PC-9 (cell line): ENCODE measurements at regions of chr22 and their contacts with region 1.

Region 1: DNA sequence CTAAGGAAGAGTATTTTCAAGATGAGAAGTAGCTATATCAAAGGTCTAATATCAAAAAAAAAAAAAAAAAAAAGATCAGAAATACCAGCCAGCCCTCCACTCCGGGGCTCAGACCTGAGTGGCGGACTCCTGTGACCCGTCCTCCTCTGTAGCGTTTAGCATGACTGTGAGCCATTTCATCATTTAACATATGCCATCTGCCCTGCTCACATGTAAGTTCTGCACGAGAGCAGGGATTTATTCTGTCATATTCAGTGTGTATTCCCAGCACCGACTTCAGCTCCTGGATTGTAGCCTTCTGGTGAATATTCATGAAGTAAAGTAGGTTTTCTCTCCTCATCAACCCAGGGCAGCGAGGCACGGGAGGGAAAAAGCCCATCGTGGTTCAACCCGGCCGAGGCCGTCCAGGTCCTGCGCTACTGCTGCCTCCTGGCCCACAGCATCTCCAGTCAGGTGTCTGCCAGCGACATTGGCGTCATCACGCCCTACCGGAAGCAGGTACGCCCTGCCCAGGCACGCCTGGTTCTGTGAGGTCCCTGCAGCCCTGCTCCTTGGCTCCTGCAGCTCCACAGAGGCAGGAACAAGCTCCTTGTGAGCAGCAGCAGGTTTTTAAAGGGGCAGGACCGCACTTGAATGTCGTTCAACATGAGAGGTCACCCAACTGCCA is 12.7 kb upstream of the PANX2 start:
- DNase-seq: peak in 1 of 2 experiments; percentile 74
- H3K4me3 ChIP-seq: no peak overlapping the region
- H3K27ac ChIP-seq: no peak overlapping the region
- H3K4me1 ChIP-seq: no peaks in the 10 kb centered on the region
- H3K27me3 ChIP-seq: peaks cover 21% of the 10 kb centered on the region; the same call in 1 of the 2 replicates
- CTCF ChIP-seq: no peak

Region 2: GRCh38 chr22:49970528-49971231 is 187.2 kb before region 1 on chr22:
- CTCF ChIA-PET with region 1: no interaction called
- POLR2A ChIA-PET with region 1: no interaction called
- intact Hi-C with region 1: no loop called
- DNase-seq: peak; percentile 97 to 99
- H3K4me3 ChIP-seq: peak overlapping the region; percentile 56
- H3K27ac ChIP-seq: peak overlapping the region; percentile 67
- H3K4me1 ChIP-seq: peaks cover 13% of the 10 kb centered on the region
- H3K27me3 ChIP-seq: no peaks in the 10 kb centered on the region
- CTCF ChIP-seq: no peak

Region 3: DNA sequence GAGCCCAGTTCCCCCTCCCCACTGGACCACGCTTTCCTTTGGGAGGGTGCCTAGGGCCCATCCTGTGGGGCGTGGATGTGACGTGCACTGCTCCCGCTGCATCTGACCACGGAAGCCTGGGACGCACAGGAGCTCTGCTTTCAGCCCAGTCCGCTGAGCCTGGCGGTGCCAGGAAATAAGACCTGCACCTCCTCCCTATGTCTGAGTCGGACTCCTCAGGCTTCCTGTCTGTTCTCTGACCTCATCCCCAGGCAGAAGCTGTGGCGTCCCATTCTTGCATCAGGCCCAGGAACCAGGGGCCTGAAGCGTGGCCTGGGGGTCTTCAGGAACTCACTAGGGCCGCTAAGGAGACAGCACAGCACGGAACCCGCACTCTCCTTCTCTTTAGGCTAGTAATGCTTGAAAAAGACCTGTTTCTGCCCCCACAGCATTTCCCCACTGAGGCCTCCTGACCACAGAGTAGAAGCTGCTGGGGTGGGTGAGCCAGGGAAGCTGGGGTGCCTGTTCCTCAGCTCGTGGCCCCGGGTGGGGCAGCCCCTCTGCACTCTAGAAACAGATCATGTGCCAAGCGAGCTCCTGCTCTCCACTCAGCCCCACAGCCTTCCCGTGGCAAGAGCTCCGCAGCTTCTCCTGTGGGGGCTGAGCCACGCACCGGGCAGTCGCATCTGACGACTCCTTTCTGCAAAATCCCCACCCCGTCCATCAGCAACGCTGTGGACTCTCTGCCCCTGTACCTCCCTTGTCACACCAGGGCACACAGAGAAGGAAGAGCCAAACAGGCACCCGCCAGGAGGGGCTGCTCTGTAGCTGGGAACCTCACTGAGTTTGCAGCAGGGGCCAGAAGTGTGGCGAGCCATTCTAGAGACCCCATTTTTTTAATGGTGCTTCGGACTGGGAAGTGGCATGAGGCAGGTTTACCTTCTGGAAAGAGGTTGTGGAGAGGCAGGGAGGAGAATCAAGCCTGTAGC is 45.4 kb before region 1 on chr22:
- CTCF ChIA-PET with region 1: no interaction called
- POLR2A ChIA-PET with region 1: no interaction called
- intact Hi-C with region 1: no loop called
- DNase-seq: no peak
- H3K4me3 ChIP-seq: no peak overlapping the region
- H3K27ac ChIP-seq: no peak overlapping the region
- H3K4me1 ChIP-seq: no peaks in the 10 kb centered on the region
- H3K27me3 ChIP-seq: peaks cover 73% of the 10 kb centered on the region
- CTCF ChIP-seq: no peak

Region 4: GRCh38 chr22:50190182-50190940 is 32.5 kb after region 1 on chr22:
- CTCF ChIA-PET with region 1: no interaction called
- POLR2A ChIA-PET with region 1: interaction called, 12 read pairs
- intact Hi-C with region 1: no loop called
- DNase-seq: peak; percentile 81 to 89
- H3K4me3 ChIP-seq: peak overlapping the region; percentile 49; the same call in 1 of the 2 replicates
- H3K27ac ChIP-seq: peak overlapping the region; percentile 67
- H3K4me1 ChIP-seq: peaks cover 35% of the 10 kb centered on the region
- H3K27me3 ChIP-seq: no peaks in the 10 kb centered on the region
- CTCF ChIP-seq: peak; percentile 54; the same call in 1 of the 2 replicates

Region 5: GRCh38 chr22:50595189-50595588 is 437.3 kb after region 1 on chr22:
- CTCF ChIA-PET with region 1: no interaction called
- POLR2A ChIA-PET with region 1: interaction called, 10 read pairs
- intact Hi-C with region 1: no loop called
- DNase-seq: no peak
- H3K4me3 ChIP-seq: no peak overlapping the region
- H3K27ac ChIP-seq: no peak overlapping the region
- H3K4me1 ChIP-seq: no peaks in the 10 kb centered on the region
- H3K27me3 ChIP-seq: peaks cover 9% of the 10 kb centered on the region
- CTCF ChIP-seq: no peak

Region 6: DNA sequence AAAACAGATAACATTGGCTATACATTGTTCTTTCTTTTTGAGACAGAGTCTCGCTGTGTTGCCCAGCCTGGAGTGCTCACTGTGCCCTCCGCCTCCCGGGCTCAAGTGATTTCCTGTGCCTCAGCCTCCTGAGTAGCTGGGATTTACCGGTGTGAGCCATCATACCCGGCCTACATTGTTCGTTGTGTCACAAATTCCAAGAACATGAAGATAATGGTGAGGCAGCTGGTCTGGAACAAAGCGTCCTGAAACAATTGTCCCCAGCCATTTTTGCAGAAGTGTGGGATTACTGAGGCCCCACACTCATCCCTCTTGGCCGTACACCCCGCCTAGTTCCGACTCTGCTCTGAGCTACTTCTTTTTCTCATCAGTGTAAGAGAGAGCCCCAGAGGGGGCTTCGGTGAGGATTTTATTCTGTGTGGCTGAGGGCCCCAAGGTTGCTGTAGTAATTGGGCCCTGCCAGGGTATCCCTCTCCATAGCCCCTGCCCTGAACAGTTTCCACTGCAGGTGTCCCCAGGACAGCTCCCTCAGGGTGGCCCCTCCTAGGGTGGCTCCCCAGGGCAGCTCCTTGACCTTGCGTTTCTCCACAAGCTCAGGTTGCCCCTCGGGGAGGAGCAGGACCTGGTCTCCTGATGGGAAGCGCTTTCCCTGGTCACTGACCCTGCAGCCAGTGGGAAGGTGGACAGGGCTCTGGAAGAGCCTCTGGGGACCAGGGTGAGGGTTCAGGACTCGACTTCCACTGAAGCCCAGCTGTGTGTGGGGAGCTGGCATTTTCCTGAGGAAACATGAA is 483.2 kb after region 1 on chr22:
- CTCF ChIA-PET with region 1: no interaction called
- POLR2A ChIA-PET with region 1: no interaction called
- intact Hi-C with region 1: no loop called
- DNase-seq: no peak
- H3K4me3 ChIP-seq: no peak overlapping the region
- H3K27ac ChIP-seq: no peak overlapping the region
- H3K4me1 ChIP-seq: no peaks in the 10 kb centered on the region
- H3K27me3 ChIP-seq: peaks cover 31% of the 10 kb centered on the region
- CTCF ChIP-seq: no peak